ENCODE measurements at regions of chr16 and their contacts with region 1.

Region 1: GRCh38 chr16:84138824-84139627 is 6.0 kb downstream of the HSDL1 start:
- DNase-seq: peak; percentile 63 to 92 (median 76)
- ATAC-seq: peak; percentile 87
- H3K4me3 ChIP-seq: peak overlapping the region; percentile 15; the same call in 1 of the 2 replicates
- H3K27ac ChIP-seq: peak overlapping the region; percentile 97
- H3K4me1 ChIP-seq: peaks cover 28 to 32% of the 10 kb centered on the region in 2 experiments
- H3K27me3 ChIP-seq: no peaks in the 10 kb centered on the region
- CTCF ChIP-seq: peak in 1 of 3 experiments; percentile 19; a peak in 1 of 6 replicates
- EP300 ChIP-seq: peak; percentile 88
- POLR2A ChIP-seq: peak; percentile 71
- RAD21 ChIP-seq: no peak; a peak in 1 of 4 replicates

Region 2: DNA sequence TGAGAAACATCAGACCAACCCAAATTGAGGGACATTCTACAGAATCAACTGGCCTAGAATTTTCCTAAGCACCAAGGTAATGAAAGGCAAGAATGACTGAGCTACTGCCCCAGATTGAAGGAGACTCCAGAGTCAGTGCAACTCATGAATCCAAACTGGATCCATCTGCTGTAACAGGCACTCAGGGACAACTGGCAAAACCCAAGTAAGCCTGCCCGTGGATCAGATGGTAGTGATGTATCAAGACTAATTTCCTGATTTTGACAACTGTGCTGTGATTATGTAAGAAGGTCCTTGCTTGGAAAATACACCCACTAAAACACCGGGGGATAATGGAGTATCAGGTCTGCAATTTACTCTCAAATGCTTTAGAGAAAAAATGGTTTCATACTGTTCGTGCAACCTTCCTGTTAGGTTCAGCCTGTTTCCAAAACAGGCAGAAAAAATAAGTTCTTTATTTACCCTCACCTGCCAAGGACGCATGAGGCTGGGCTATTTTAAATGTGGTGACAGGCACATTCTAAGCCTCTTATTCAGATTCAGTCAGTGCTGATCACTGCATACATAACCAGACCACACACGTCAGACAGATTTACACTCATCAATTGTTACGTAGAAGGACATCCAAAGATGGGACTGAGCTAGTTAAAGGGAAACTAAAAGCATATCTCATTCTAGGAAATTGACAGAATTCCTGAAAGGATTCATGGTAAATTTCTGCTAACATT is 29.3 kb before region 1 on chr16:
- CTCF ChIA-PET with region 1: no interaction called
- POLR2A ChIA-PET with region 1: interaction called, 145 read pairs
- in situ Hi-C with region 1: no loop called
- intact Hi-C with region 1: no loop called
- DNase-seq: no peak
- ATAC-seq: no peak
- H3K4me3 ChIP-seq: no peak overlapping the region
- H3K27ac ChIP-seq: no peak overlapping the region
- H3K4me1 ChIP-seq: peaks cover 0 to 7% of the 10 kb centered on the region in 2 experiments; a peak in 2 of 5 replicates
- H3K27me3 ChIP-seq: no peaks in the 10 kb centered on the region
- CTCF ChIP-seq: no peak
- EP300 ChIP-seq: no peak
- POLR2A ChIP-seq: no peak
- RAD21 ChIP-seq: no peak

Region 3: GRCh38 chr16:84175350-84176081 is 36.5 kb after region 1 on chr16:
- CTCF ChIA-PET with region 1: interaction called, 3 read pairs
- POLR2A ChIA-PET with region 1: interaction called, 4 read pairs
- in situ Hi-C with region 1: no loop called
- intact Hi-C with region 1: loop called (anchors 2 kb)
- DNase-seq: peak; percentile 76 to 85 (median 80)
- ATAC-seq: peak; percentile 92
- H3K4me3 ChIP-seq: no peak overlapping the region
- H3K27ac ChIP-seq: no peak overlapping the region
- H3K4me1 ChIP-seq: peaks cover 7 to 36% of the 10 kb centered on the region in 2 experiments; a peak in 3 of 5 replicates
- H3K27me3 ChIP-seq: peaks cover 5 to 26% of the 10 kb centered on the region in 2 experiments; a peak in 4 of 5 replicates
- CTCF ChIP-seq: peak; percentile 80 to 92 (median 90)
- EP300 ChIP-seq: no peak
- POLR2A ChIP-seq: no peak
- RAD21 ChIP-seq: peak; percentile 81 to 92

Region 4: GRCh38 chr16:84350625-84351400 is 211.8 kb after region 1 on chr16:
- CTCF ChIA-PET with region 1: no interaction called
- POLR2A ChIA-PET with region 1: no interaction called
- in situ Hi-C with region 1: no loop called
- intact Hi-C with region 1: no loop called
- DNase-seq: no peak
- ATAC-seq: no peak
- H3K4me3 ChIP-seq: no peak overlapping the region
- H3K27ac ChIP-seq: no peak overlapping the region
- H3K4me1 ChIP-seq: no peaks in the 10 kb centered on the region
- H3K27me3 ChIP-seq: peaks cover 35 to 70% of the 10 kb centered on the region in 2 experiments
- CTCF ChIP-seq: no peak
- EP300 ChIP-seq: no peak
- POLR2A ChIP-seq: no peak
- RAD21 ChIP-seq: no peak

Measured in K562 (cell line).